Activated CD4-positive, alpha-beta memory T cell treated with anti-CD3 and anti-CD28 coated beads for 36 hours (primary cell): ENCODE measurements at regions of chr14 and their contacts with region 1.

Region 1: GRCh38 chr14:75307700-75308379 is 29.2 kb downstream of the FOS start:
- DNase-seq: peak; percentile 84
- H3K4me3 Mint-ChIP-seq: no peak overlapping the region
- H3K27ac Mint-ChIP-seq: no peak overlapping the region
- H3K4me1 Mint-ChIP-seq: peaks cover 13% of the 10 kb centered on the region
- H3K27me3 Mint-ChIP-seq: peaks cover 5% of the 10 kb centered on the region

Region 2: DNA sequence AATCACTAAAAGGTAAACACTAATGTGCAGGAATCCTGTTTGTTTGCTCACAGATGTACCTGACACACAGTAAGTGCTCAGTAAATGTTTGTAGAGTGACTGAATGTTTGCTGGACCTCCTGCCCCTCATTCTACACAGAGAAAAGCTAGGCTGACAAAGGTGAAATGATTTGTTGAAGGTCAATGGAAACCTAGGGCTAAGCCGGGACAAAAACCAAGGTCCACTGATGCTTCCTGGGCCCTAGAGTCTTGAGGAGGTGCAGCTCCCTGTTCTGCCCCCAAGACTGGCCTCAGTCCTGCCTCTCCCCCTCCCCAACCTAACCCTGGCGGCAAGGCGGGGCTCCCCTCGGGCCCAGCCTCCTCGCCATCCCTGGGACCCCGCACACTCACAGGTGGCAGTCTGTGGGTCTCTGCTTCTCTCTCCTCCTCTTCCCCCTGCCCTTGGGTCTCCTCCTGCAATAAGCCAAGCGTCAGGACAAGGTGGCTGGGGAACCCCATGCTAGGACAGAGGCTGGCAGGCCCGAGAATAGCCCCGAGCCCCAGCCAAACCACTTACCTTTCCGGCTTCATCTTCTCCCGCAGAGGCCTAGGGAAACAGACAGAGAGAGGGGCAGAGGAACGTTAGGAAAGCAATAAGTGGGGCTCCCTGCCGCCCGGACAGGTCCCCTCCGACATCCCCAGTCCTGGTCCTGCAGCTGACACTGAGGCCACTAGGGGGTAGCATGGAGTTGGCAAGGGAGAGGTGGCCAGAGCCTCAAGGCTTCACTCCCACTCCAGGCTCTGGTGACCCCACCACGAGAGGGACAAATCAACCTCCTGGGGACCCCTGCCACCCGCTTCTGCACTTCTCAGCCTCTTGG is 361.8 kb before region 1 on chr14:
- CTCF ChIA-PET with region 1: interaction called, 4 read pairs
- POLR2A ChIA-PET with region 1: no interaction called
- intact Hi-C with region 1: loop called (anchors 5 kb)
- DNase-seq: peak; percentile 84
- H3K4me3 Mint-ChIP-seq: no peak overlapping the region
- H3K27ac Mint-ChIP-seq: no peak overlapping the region
- H3K4me1 Mint-ChIP-seq: peaks cover 25% of the 10 kb centered on the region
- H3K27me3 Mint-ChIP-seq: no peaks in the 10 kb centered on the region

Region 3: GRCh38 chr14:75249251-75249957 is 58.4 kb before region 1 on chr14:
- CTCF ChIA-PET with region 1: no interaction called
- POLR2A ChIA-PET with region 1: no interaction called
- intact Hi-C with region 1: no loop called
- DNase-seq: peak; percentile 93
- H3K4me3 Mint-ChIP-seq: peak overlapping the region; percentile 33
- H3K27ac Mint-ChIP-seq: peak overlapping the region; percentile 64
- H3K4me1 Mint-ChIP-seq: peaks cover 55% of the 10 kb centered on the region
- H3K27me3 Mint-ChIP-seq: peaks cover 4% of the 10 kb centered on the region

Region 4: GRCh38 chr14:75293920-75294642 is 13.8 kb before region 1 on chr14:
- CTCF ChIA-PET with region 1: interaction called, 10 read pairs
- POLR2A ChIA-PET with region 1: no interaction called
- intact Hi-C with region 1: no loop called
- DNase-seq: peak; percentile 96
- H3K4me3 Mint-ChIP-seq: peak overlapping the region; percentile 79
- H3K27ac Mint-ChIP-seq: peak overlapping the region; percentile 67
- H3K4me1 Mint-ChIP-seq: peaks cover 20% of the 10 kb centered on the region
- H3K27me3 Mint-ChIP-seq: no peaks in the 10 kb centered on the region

Region 5: DNA sequence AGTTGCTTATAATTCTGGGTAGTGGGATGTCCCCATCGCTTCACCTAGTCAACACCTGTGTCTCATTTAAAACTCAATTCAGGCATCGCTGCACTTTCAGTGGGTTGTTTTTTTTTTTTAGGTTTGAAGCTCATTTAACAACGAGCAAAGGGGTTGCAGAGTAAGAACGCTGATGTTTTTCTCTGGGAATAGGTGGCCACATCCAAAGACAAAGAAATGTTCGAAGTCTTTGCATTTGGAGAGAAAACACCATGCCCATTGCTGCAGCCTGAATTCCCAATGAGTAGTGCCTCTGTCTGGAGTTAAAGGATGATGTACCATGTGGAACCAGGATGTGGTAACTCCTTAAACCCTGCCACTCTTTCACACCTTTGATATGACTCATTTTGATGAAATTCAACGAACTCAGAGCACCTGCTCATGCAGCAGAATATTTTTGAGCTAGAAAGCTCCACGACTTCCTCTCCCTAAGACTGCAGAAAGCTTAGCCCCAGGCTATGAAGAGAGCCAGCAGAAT is 179.4 kb after region 1 on chr14:
- CTCF ChIA-PET with region 1: interaction called, 98 read pairs
- POLR2A ChIA-PET with region 1: no interaction called
- intact Hi-C with region 1: loop called (anchors 1 kb)
- DNase-seq: peak; percentile 25
- H3K4me3 Mint-ChIP-seq: no peak overlapping the region
- H3K27ac Mint-ChIP-seq: peak overlapping the region; percentile 62
- H3K4me1 Mint-ChIP-seq: peaks cover 22% of the 10 kb centered on the region
- H3K27me3 Mint-ChIP-seq: peaks cover 2% of the 10 kb centered on the region

Region 6: DNA sequence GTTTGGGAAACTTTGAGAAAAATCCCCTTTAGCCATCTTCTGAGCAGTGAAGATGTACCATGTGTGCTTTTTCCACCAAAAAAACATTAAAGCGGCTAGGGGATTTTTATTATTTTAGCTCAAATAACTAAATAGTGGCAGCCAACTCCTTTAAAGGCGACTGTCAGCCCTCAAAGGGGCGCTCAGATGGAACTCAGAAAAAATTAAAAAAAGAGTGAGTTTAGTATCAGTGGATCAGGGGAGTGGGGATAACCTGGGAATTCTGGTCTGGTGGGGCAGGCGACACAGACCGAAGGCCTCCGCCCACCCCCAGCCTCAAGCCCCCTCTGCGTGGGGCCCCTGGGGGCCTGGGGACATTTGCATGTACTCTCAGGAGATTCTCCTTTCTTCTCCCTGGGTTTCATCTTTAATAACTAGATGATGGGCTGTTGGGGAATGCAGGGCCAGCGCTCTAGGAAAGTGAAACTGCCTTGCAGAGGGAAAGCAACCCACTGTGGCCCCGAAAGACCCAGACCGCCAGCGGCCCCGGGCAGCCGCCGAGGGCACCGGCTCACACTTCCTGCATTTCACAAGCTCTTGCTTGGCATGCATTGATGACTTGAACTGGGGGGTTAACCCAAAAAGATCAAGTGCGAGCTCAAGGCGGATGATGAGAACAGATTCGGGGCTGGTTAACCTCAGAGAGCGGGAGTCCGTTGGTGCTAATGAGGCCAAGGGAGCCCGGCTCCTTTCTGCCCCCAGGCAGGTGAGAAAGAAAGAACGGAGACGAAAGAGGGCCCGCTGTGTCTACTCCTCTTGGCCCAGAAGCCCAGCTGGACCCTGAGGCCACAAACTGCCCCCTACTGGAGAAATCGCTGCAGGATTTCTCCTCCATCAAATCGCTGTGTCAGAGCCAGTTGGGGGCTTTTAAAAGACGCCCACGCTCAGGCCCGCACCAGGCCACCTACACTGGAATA is 207.1 kb after region 1 on chr14:
- CTCF ChIA-PET with region 1: interaction called, 15 read pairs
- POLR2A ChIA-PET with region 1: no interaction called
- intact Hi-C with region 1: no loop called
- DNase-seq: peak; percentile 77
- H3K4me3 Mint-ChIP-seq: peak overlapping the region; percentile 80
- H3K27ac Mint-ChIP-seq: peak overlapping the region; percentile 95
- H3K4me1 Mint-ChIP-seq: peaks cover 69% of the 10 kb centered on the region
- H3K27me3 Mint-ChIP-seq: no peaks in the 10 kb centered on the region

Region 7: GRCh38 chr14:75577729-75578101 is 269.9 kb after region 1 on chr14:
- CTCF ChIA-PET with region 1: interaction called, 14 read pairs
- POLR2A ChIA-PET with region 1: no interaction called
- intact Hi-C with region 1: no loop called
- DNase-seq: peak; percentile 87
- H3K4me3 Mint-ChIP-seq: peak overlapping the region; percentile 86
- H3K27ac Mint-ChIP-seq: peak overlapping the region; percentile 88
- H3K4me1 Mint-ChIP-seq: peaks cover 13% of the 10 kb centered on the region
- H3K27me3 Mint-ChIP-seq: no peaks in the 10 kb centered on the region